ENCODE measurements at regions of chr2 and their contacts with region 1.

Region 1: DNA sequence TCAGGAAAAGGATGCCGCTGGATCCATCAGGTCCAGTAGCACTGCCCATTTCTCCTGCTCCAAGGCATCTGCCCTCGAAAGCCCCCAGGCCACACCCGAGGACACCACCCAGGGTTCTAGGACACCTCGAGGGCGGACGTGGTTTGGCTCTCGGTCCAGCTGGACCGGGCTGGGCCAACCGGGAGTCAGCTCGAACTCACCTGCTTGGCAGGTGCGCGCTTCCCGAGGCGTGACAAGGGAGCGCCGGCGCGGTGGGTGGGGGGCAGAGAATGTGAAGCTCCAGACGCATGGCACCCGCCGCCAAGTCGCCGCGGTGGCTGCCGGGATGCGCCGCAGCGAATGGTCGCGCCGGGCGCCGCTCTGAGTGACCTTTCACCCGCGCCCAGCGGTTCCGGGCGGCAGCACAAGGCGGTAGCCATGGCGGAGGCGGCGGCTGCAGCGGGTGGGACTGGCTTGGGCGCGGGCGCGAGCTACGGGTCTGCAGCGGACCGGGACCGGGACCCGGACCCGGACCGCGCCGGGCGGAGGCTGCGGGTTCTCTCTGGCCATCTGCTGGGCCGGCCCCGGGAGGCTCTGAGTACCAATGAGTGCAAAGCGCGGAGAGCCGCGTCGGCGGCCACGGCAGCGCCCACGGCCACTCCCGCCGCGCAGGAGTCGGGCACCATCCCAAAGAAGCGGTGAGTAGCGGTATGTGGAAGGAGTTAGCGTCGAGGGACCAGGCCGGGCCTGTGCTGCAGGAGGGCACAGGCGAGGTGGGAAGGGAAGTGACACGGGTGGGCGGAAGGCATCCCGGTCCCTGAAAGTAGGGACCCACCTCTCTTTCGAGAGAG is at the start of gene AGPS:
- DNase-seq: peak; percentile 85
- H3K4me3 Mint-ChIP-seq: peak within 1 kb of the TSS; percentile 93
- H3K27ac Mint-ChIP-seq: peak within 1 kb of the TSS; percentile 62
- H3K4me1 Mint-ChIP-seq: peaks cover 59% of the 10 kb centered on the region
- H3K27me3 Mint-ChIP-seq: no peaks in the 10 kb centered on the region
- total RNA-seq, gene AGPS: 50.7 to 51.8 TPM

Region 2: DNA sequence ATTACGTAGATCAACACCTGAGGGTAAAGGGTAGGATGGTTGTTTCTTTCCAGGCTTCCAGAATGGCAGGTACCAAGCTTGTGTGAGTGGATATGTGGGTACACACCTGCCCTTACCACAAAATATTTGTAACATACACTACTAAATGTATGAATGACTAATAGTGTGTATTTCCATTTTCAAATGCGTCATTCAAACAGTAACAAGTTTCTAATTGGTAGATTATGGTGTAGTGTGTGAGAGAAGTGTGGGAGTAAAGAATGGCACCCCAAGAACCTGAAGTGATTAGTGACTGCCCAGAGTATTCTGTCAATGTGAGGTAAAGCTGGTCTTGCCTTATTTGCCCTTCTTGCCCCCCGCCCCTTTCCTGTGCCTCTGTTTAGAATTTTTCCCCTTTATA is 21.1 kb after region 1 on chr2:
- CTCF ChIA-PET with region 1: interaction called, 20 read pairs
- intact Hi-C with region 1: loop called (anchors 1 kb)
- DNase-seq: no peak
- H3K4me3 Mint-ChIP-seq: no peak overlapping the region
- H3K27ac Mint-ChIP-seq: no peak overlapping the region
- H3K4me1 Mint-ChIP-seq: peaks cover 41% of the 10 kb centered on the region
- H3K27me3 Mint-ChIP-seq: no peaks in the 10 kb centered on the region

Region 3: GRCh38 chr2:177419274-177419673 is 26.7 kb after region 1 on chr2:
- CTCF ChIA-PET with region 1: interaction called, 20 read pairs
- intact Hi-C with region 1: loop called (anchors 1 kb)
- DNase-seq: no peak
- H3K4me3 Mint-ChIP-seq: no peak overlapping the region
- H3K27ac Mint-ChIP-seq: peak overlapping the region; percentile 63
- H3K4me1 Mint-ChIP-seq: peaks cover 37% of the 10 kb centered on the region
- H3K27me3 Mint-ChIP-seq: no peaks in the 10 kb centered on the region

Region 4: DNA sequence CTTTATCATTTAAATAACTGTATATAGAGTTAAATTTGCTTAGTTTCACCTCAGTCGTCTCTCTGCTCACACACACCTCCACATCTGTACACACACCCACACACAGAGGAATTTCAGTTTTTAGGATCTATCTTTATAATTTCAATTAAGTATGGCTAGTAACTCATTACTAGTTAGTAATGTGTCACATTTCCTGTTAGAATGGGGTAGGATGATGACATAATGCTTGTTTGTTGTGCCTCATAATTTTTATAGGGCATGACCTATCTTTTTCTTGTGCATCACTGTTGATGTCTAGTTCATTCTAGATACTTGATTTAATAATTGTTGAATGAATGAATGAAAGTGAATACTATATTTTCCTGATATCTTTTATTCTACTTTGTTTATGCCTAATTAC is 108.6 kb after region 1 on chr2:
- CTCF ChIA-PET with region 1: no interaction called
- intact Hi-C with region 1: no loop called
- DNase-seq: no peak
- H3K4me3 Mint-ChIP-seq: no peak overlapping the region
- H3K27ac Mint-ChIP-seq: peak overlapping the region; percentile 37
- H3K4me1 Mint-ChIP-seq: peaks cover 8% of the 10 kb centered on the region
- H3K27me3 Mint-ChIP-seq: no peaks in the 10 kb centered on the region

Region 5: GRCh38 chr2:177552422-177553175 is 160.0 kb after region 1 on chr2:
- CTCF ChIA-PET with region 1: no interaction called
- intact Hi-C with region 1: loop called (anchors 1 kb)
- DNase-seq: peak; percentile 93
- H3K4me3 Mint-ChIP-seq: peak overlapping the region; percentile 88
- H3K27ac Mint-ChIP-seq: peak overlapping the region; percentile 99
- H3K4me1 Mint-ChIP-seq: peaks cover 8% of the 10 kb centered on the region
- H3K27me3 Mint-ChIP-seq: no peaks in the 10 kb centered on the region

Region 6: DNA sequence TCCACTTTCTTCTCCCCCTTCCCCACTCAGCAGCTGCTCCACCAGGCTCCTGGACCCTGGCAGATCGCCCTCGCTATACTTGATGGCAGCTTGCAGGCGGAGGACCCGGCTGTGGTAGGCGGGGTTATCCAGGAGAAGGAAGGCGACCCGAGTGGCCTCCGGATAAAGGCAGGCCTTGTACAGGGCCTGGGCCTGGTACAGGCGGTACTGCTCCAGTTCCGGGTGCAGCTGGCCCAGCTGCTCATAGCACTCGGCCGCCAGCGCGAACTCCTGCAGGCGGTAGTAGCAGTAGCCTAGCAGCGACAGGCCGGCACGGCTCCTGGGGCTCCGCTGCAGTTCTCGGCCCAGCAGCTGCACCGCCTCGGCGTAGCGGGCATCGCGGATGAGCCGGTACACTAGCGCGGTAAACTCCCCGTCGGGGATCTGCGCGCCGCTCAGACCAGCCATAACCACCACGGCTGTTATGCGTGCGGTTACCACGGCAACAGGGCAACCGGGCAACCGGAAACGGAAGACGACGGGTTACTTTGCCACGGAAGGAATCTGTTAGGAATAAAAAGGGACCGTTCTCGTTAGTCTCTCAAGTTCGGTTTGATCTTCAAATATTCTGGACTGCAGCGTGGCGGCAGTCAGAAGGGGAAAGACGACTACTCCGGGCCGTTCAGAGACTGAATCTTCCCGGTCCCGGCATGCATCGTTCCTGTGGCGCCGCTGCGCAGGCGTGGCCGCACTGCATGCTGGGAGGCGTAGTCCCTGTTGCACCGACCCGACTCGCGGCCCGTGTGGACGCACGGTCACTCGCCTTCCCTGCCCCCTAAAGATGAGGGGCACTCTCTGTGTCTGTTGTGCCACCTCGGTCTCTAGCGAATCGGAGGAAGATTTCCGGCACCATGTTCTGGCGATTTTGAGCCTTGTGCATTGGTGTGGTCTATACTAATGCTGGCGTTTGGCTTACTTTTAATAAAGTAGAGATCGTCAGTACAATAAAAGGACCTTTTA is 226.0 kb after region 1 on chr2:
- CTCF ChIA-PET with region 1: no interaction called
- intact Hi-C with region 1: loop called (anchors 1 kb)
- DNase-seq: peak; percentile 95
- H3K4me3 Mint-ChIP-seq: peak overlapping the region; percentile 93
- H3K27ac Mint-ChIP-seq: peak overlapping the region; percentile 96
- H3K4me1 Mint-ChIP-seq: peaks cover 3% of the 10 kb centered on the region
- H3K27me3 Mint-ChIP-seq: no peaks in the 10 kb centered on the region

Region 7: GRCh38 chr2:178522950-178523595 is 1130.5 kb after region 1 on chr2:
- CTCF ChIA-PET with region 1: no interaction called
- intact Hi-C with region 1: no loop called
- DNase-seq: peak; percentile 92
- H3K4me3 Mint-ChIP-seq: peak overlapping the region; percentile 82
- H3K27ac Mint-ChIP-seq: peak overlapping the region; percentile 87
- H3K4me1 Mint-ChIP-seq: peaks cover 48% of the 10 kb centered on the region
- H3K27me3 Mint-ChIP-seq: no peaks in the 10 kb centered on the region

Measured in activated naive CD4-positive, alpha-beta T cell treated with anti-CD3 and anti-CD28 coated beads for 36 hours (primary cell).